IMR-90 (cell line): ENCODE measurements at regions of chr5 and their contacts with region 1.

Region 1: GRCh38 chr5:68287976-68288706 is 72.6 kb downstream of the PIK3R1 start:
- DNase-seq: peak; percentile 37
- ATAC-seq: peak; percentile 90
- H3K4me3 ChIP-seq: peak overlapping the region; percentile 48
- H3K27ac ChIP-seq: peak overlapping the region; percentile 23
- H3K4me1 ChIP-seq: peaks cover 11% of the 10 kb centered on the region
- H3K27me3 ChIP-seq: no peaks in the 10 kb centered on the region
- CTCF ChIP-seq: no peak
- POLR2A ChIP-seq: no peak
- RAD21 ChIP-seq: no peak; the same call in 1 of the 2 replicates

Region 2: DNA sequence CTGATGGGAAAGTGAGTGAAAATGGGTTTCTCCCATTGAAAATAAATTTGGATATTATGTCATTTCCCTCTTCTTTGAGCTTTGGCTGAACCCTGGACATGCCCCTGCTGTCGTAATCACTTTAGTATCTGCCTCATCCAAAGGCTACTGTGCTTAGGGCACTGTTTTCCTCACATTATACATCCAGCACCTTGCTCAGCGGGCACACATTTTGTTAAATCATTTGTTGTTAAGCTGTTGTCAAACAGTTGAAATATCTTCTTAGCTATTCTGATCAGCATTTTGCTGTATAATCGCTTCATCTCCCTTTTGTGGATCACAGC is 738.9 kb before region 1 on chr5:
- CTCF ChIA-PET with region 1: no interaction called
- POLR2A ChIA-PET with region 1: no interaction called
- dilution Hi-C with region 1: no loop called
- in situ Hi-C with region 1: no loop called
- intact Hi-C with region 1: no loop called
- DNase-seq: no peak
- ATAC-seq: no peak
- H3K4me3 ChIP-seq: no peak overlapping the region
- H3K27ac ChIP-seq: no peak overlapping the region
- H3K4me1 ChIP-seq: no peaks in the 10 kb centered on the region
- H3K27me3 ChIP-seq: no peaks in the 10 kb centered on the region
- CTCF ChIP-seq: no peak
- POLR2A ChIP-seq: no peak
- RAD21 ChIP-seq: no peak

Region 3: DNA sequence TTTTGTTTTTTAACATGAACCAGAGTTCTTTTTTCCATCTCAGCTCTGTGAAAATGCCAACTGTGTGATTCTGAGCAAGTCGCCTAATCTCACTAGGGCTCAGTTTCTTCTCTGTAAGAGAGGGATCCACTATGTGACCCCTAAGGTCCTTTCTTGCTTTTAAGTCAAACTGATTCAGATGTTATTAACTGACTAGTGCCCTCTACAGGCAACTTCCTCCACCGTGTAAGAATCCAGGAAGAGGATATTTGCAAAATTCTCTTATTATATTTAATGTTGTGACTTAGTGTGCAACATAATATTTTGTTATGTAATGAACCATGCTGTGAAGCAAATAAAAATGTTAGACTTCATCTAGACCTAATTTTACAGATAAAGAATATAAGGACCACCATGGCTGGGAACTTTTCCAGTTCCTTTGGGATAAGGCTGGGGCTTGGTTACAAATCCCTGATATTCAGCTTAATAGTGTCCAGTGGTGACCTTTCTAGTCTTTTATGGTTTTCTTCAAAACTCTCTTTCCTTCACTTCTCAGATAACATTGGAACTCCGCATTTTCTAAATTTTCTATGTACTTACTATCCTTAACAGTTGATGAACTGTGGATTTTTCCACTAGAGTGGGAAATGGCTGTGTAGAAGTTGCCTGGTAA is 172.1 kb after region 1 on chr5:
- CTCF ChIA-PET with region 1: interaction called, 13 read pairs
- POLR2A ChIA-PET with region 1: no interaction called
- dilution Hi-C with region 1: no loop called
- in situ Hi-C with region 1: loop called (anchors 5 kb)
- intact Hi-C with region 1: loop called (anchors 1 kb)
- DNase-seq: peak; percentile 70
- ATAC-seq: peak; percentile 59
- H3K4me3 ChIP-seq: no peak overlapping the region
- H3K27ac ChIP-seq: no peak overlapping the region
- H3K4me1 ChIP-seq: peaks cover 2% of the 10 kb centered on the region
- H3K27me3 ChIP-seq: no peaks in the 10 kb centered on the region
- CTCF ChIP-seq: peak; percentile 67
- POLR2A ChIP-seq: no peak
- RAD21 ChIP-seq: peak; percentile 62

Region 4: DNA sequence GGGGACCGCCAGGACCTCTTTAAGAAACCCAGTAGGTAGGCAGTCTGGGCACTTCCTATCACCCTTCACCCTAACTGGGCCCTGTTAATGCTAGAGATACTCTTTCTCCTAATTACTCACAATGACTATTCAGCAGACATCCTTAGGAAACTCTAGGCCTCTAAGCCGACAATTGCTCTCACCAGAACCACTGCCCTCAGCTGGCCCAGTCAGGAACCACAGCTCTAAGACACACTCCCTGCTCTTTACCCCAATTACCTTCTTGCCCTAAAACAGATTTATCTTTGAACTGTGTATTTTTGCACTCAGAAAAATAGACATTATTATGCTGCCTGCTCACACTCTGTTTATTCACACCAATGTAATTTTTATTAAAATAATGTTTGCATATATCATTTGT is 373.1 kb after region 1 on chr5:
- CTCF ChIA-PET with region 1: no interaction called
- POLR2A ChIA-PET with region 1: no interaction called
- dilution Hi-C with region 1: no loop called
- in situ Hi-C with region 1: no loop called
- intact Hi-C with region 1: loop called (anchors 2 kb)
- DNase-seq: peak; percentile 22
- ATAC-seq: 0 out of 2 replicates have a peak, but pooled peaks have one; percentile 40
- H3K4me3 ChIP-seq: no peak overlapping the region
- H3K27ac ChIP-seq: no peak overlapping the region
- H3K4me1 ChIP-seq: no peaks in the 10 kb centered on the region
- H3K27me3 ChIP-seq: no peaks in the 10 kb centered on the region
- CTCF ChIP-seq: peak; percentile 32
- POLR2A ChIP-seq: no peak
- RAD21 ChIP-seq: peak; percentile 39

Region 5: GRCh38 chr5:68884883-68885282 is 596.7 kb after region 1 on chr5:
- CTCF ChIA-PET with region 1: no interaction called
- POLR2A ChIA-PET with region 1: no interaction called
- dilution Hi-C with region 1: no loop called
- in situ Hi-C with region 1: no loop called
- intact Hi-C with region 1: loop called (anchors 5 kb)
- DNase-seq: no peak
- ATAC-seq: no peak
- H3K4me3 ChIP-seq: no peak overlapping the region
- H3K27ac ChIP-seq: no peak overlapping the region
- H3K4me1 ChIP-seq: no peaks in the 10 kb centered on the region
- H3K27me3 ChIP-seq: 0 out of 2 replicates have a peak, but pooled peaks cover 1% of the 10 kb centered on the region
- CTCF ChIP-seq: no peak
- POLR2A ChIP-seq: no peak
- RAD21 ChIP-seq: no peak

Region 6: GRCh38 chr5:69007726-69008368 is 719.7 kb after region 1 on chr5:
- CTCF ChIA-PET with region 1: no interaction called
- POLR2A ChIA-PET with region 1: no interaction called
- dilution Hi-C with region 1: no loop called
- in situ Hi-C with region 1: no loop called
- intact Hi-C with region 1: loop called (anchors 5 kb)
- DNase-seq: peak; percentile 30
- ATAC-seq: peak; percentile 88
- H3K4me3 ChIP-seq: no peak overlapping the region
- H3K27ac ChIP-seq: no peak overlapping the region
- H3K4me1 ChIP-seq: no peaks in the 10 kb centered on the region
- H3K27me3 ChIP-seq: peaks cover 4% of the 10 kb centered on the region
- CTCF ChIP-seq: peak; percentile 57
- POLR2A ChIP-seq: no peak
- RAD21 ChIP-seq: peak; percentile 55